ENCODE measurements at regions of chr10 and their contacts with region 1.

Region 1: GRCh38 chr10:3852147-3852904 is 67.3 kb upstream of the KLF6 start:
- DNase-seq: peak; percentile 86
- H3K4me3 Mint-ChIP-seq: peak overlapping the region; percentile 36
- H3K27ac Mint-ChIP-seq: peak overlapping the region; percentile 92
- H3K4me1 Mint-ChIP-seq: peaks cover 53% of the 10 kb centered on the region
- H3K27me3 Mint-ChIP-seq: no peaks in the 10 kb centered on the region

Region 2: DNA sequence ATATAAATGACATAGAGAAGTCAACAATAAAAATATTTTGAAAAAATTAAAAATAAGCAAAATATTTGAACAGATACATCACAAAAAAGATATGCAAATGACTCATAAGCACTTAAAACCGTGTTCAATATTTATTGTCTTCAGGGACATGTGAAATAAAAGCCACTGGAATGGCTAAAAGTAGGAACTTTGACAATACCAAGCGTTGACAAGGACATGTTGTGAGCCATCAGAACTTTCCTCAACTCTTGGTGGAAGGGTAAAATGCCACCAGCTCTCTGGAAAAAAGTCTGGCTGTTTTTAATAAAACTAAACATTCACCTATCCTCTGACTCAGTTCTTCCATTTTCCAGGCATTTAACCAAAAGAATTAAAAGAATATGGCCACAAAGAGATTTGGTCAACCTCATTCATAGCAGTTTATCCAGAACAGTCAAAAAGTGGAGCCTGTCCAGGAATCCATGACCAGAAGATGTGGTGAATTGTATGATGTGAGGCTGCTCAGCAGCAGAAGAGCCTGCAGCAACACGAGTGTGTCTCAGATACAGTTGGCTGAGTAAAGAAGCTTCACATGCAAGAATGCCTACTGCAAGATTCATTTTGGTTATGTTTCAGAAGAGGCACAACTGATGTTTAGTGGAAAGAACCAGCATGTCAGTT is 60.2 kb before region 1 on chr10:
- CTCF ChIA-PET with region 1: no interaction called
- POLR2A ChIA-PET with region 1: no interaction called
- intact Hi-C with region 1: no loop called
- DNase-seq: no peak
- H3K4me3 Mint-ChIP-seq: no peak overlapping the region
- H3K27ac Mint-ChIP-seq: peak overlapping the region; percentile 29
- H3K4me1 Mint-ChIP-seq: peaks cover 33% of the 10 kb centered on the region
- H3K27me3 Mint-ChIP-seq: no peaks in the 10 kb centered on the region

Region 3: GRCh38 chr10:3805791-3806461 is 46.4 kb before region 1 on chr10:
- CTCF ChIA-PET with region 1: interaction called, 8 read pairs
- POLR2A ChIA-PET with region 1: interaction called, 89 read pairs
- intact Hi-C with region 1: loop called (anchors 1 kb)
- DNase-seq: peak; percentile 72
- H3K4me3 Mint-ChIP-seq: peak overlapping the region; percentile 68
- H3K27ac Mint-ChIP-seq: no peak overlapping the region
- H3K4me1 Mint-ChIP-seq: peaks cover 62% of the 10 kb centered on the region
- H3K27me3 Mint-ChIP-seq: no peaks in the 10 kb centered on the region

Region 4: DNA sequence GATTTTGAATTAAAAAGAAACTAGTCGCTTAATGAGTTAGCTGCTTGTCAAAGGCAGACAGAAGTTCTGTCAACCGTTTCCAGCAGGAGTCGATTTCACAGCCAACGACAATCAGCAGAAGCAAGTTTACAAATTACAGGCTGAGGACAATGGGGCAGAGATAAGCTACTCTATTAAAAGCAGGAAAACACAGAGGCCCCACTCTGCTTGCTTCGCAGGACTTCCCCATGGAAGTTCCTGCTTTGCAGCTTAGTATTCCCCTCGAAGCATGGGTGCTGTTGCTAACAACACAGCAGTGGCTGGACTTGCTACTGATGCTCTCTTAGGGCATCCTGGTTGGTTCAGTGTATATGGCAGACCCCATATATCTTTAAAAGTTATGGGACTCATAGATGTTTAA is 16.6 kb before region 1 on chr10:
- CTCF ChIA-PET with region 1: interaction called, 9 read pairs
- POLR2A ChIA-PET with region 1: interaction called, 8 read pairs
- intact Hi-C with region 1: loop called (anchors 1 kb)
- DNase-seq: no peak
- H3K4me3 Mint-ChIP-seq: peak overlapping the region; percentile 43
- H3K27ac Mint-ChIP-seq: peak overlapping the region; percentile 80
- H3K4me1 Mint-ChIP-seq: peaks cover 72% of the 10 kb centered on the region
- H3K27me3 Mint-ChIP-seq: no peaks in the 10 kb centered on the region

Region 5: DNA sequence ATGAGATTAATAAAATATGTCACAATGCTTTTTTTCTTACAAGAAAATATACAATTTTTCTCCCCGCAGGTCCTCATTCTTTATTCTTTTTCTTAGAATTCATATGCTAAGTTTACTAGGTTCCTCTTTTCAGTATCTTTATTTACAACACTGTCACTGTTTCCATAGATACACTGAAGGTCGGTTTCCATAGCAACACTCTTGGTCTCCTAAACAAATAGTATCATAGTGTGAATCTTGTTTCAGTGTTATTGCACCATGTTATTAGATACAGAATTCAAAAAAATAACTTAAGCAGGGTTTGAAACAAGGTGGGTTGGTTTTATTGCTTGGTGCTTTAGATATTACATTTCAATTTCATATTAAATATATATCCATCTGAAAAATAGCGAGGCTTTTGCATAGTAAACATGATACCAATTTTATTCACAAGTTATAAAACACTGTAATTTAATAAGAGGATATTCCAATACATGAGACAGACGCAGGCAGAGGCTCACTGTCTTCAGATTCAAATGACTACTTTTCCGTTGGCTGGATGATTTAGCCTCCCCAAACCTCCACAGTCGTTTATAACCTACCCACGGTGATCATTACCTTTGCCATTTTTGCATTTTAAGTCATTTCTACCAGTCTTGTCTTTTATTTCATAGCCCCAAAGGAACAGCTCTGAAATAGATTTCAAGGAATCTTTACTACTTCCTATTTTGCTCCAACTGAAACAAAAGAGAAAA is 21.6 kb after region 1 on chr10:
- CTCF ChIA-PET with region 1: interaction called, 8 read pairs
- POLR2A ChIA-PET with region 1: interaction called, 96 read pairs
- intact Hi-C with region 1: loop called (anchors 1 kb)
- DNase-seq: no peak
- H3K4me3 Mint-ChIP-seq: no peak overlapping the region
- H3K27ac Mint-ChIP-seq: peak overlapping the region; percentile 87
- H3K4me1 Mint-ChIP-seq: peaks cover 72% of the 10 kb centered on the region
- H3K27me3 Mint-ChIP-seq: no peaks in the 10 kb centered on the region

Region 6: DNA sequence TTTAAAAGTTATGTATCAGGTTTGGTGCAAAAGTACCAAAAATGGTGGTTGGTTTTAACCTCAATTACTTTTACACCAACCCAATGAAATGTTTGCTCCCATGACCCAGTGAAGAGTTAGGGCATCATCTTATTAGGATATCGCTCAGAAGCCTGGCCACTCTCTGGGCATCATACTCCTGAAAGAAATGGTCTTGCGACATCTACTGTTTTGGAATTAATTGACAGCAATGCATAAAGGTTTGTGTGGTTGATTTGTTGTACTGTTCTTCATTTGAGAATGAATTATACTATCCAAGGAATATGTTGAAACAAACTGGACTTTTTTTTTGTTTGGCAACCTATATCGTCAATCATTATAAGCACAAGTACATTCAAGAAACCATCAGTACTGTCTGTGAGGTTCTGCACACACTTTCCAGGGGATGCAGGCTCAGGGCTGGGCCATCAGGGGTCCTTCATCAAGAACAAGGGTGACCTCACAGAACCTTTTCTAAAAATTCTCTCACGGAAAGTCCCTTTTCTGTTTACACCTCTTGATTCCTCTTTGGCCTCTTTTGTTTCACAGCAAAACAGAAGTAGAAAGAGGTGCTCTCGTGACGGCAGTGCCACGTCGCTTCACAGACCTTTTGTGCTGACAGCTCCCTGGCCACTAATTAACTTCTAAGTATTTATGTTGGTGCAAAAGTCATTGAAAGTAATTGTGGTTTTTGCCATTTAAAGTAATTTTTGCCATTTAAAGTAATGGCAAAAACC is 49.9 kb after region 1 on chr10:
- CTCF ChIA-PET with region 1: no interaction called
- POLR2A ChIA-PET with region 1: interaction called, 3 read pairs
- intact Hi-C with region 1: loop called (anchors 1 kb)
- DNase-seq: peak; percentile 69
- H3K4me3 Mint-ChIP-seq: no peak overlapping the region
- H3K27ac Mint-ChIP-seq: peak overlapping the region; percentile 79
- H3K4me1 Mint-ChIP-seq: peaks cover 45% of the 10 kb centered on the region
- H3K27me3 Mint-ChIP-seq: no peaks in the 10 kb centered on the region

Measured in activated CD4-positive, alpha-beta memory T cell treated with anti-CD3 and anti-CD28 coated beads for 36 hours (primary cell).